ENCODE measurements at regions of chr5 and their contacts with region 1.

Region 1: DNA sequence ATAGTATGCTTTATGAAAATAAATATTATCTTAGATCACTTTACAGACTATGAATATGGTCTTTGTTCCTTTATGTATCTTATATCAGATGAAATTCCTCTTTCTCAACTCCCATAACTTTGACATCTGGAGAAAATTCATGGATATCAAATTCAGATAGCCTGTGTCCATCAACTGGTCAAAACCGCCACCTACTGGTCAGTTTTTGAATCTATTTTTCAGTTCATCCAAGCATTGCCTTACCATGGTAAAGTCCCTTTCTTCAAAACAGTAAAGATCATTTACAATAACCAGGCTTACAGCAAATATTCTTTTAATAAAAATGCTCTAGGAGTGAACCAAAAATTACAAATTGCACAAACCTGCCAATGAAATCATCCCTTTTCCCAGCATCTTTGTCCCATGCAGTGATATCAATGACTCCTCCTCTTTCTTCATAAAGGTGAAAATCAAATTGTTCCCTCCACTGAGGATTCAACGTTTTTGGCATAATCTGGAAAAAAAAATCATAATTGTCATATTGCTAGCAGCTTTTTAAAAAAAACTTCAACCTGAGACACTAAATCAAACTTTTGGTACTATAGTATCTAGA is 290.5 kb downstream of the SLF1 start:
- DNase-seq: peak; percentile 26
- H3K4me3 Mint-ChIP-seq: no peak overlapping the region
- H3K27ac Mint-ChIP-seq: no peak overlapping the region
- H3K4me1 Mint-ChIP-seq: no peaks in the 10 kb centered on the region
- H3K27me3 Mint-ChIP-seq: no peaks in the 10 kb centered on the region

Region 2: DNA sequence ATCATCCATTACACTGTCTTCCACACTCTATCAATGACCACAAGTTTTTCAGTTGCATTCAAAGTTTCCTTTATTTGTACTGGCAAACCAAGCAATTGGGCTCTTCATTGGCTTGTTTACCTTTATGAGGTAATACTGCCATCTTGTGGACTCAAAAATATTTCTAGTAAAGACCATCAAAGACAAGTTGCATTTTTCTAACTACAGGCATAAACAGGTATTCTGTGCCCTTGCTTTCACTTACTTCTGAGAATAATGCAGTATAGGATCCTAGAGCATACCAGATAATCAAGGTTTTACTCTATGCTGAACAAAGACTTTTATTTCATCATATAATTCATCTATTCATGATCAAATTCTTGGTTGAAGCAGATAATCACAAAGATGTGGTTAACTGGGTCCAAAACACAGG is 993.8 kb before region 1 on chr5:
- CTCF ChIA-PET with region 1: no interaction called
- intact Hi-C with region 1: loop called (anchors 10 kb)
- DNase-seq: no peak
- H3K4me3 Mint-ChIP-seq: no peak overlapping the region
- H3K27ac Mint-ChIP-seq: no peak overlapping the region
- H3K4me1 Mint-ChIP-seq: no peaks in the 10 kb centered on the region
- H3K27me3 Mint-ChIP-seq: no peaks in the 10 kb centered on the region

Region 3: DNA sequence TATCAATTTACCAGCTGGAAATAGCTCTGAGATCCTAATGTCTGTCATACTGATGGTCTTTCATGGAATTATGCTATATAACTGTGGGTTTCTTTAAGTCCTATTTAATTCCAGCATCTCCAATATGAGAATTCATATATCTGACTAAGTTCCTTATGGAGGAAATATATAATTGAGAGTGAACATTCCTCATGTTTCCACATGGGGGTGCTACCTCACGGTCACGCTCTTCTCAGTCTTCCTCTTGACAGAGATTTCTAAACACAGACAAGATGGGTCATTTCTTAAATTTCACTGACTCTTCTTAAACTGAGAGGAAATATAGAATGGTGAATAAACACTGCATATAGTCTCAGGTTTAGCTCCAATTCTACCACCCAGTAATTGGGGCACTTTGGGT is 78.5 kb before region 1 on chr5:
- CTCF ChIA-PET with region 1: no interaction called
- intact Hi-C with region 1: loop called (anchors 2 kb)
- DNase-seq: no peak
- H3K4me3 Mint-ChIP-seq: no peak overlapping the region
- H3K27ac Mint-ChIP-seq: no peak overlapping the region
- H3K4me1 Mint-ChIP-seq: no peaks in the 10 kb centered on the region
- H3K27me3 Mint-ChIP-seq: peaks cover 13% of the 10 kb centered on the region